Left cardiac atrium (tissue), 4 donors: ENCODE measurements at regions of chr10 and their contacts with region 1.

Region 1: DNA sequence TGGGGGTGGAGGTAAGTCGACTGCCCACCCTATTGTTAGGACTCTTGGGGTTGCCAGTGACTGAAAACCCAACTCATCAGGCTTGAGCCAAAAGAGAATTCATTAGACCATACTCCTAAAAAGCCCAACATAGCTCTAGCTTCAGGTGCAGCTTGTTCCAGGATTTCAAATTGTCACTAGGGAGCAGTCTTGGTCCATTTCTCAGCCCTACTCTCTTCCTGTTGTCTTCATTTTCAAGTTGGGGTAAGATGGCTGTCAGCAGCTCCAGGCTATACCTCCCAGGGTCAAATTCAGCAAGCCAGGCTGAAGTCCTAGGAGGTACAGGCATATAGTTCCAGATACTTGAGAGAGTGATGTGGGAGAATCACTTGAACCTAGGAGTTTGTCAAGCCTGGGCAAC is 14.9 kb upstream of the COL13A1 start:
- DNase-seq: no peak
- ATAC-seq: peak; percentile 36 to 55

Region 2: DNA sequence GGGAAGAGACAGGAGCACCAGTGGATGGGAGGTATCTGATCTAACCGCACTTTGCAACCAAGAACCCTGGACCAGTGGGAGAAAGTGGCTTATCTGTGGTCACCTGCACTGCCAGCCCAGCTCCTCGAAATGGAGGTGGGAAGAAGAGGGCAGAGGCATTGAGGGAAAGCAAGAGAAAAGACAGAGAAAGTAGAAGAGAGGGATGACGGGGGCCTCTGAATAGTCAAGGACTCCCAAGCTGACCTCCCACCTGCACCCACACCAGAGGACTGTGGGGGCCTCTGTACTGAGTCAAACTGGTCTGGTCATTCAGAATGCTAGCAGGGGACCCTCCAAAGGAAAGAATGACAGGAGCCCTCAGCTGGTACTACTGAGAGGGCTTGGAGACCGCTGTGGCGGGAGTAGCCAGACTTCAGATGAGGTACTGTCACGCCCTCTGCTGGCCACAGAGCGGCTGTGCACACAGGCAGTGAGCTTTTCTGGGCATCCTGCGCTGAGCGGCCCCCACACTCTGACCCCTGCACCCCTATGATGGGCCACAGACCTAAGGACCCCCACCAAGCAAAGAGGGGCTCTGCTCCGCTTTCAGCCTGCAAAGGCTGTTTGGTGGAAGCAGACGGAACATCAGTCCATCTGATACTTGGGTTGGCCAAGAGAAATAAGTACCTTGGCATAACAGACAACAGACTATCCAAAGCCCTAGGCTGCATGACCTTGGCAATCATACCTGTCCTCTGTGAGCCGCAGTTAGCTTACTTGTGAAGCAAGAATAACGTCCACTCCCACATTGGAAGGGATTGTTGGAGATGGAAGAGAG is 127.8 kb after region 1 on chr10:
- intact Hi-C with region 1: loop called (anchors 5 kb)
- DNase-seq: peak; percentile 80
- ATAC-seq: peak; percentile 70 to 79